Endothelial cell of umbilical vein (primary cell): ENCODE measurements at regions of chr21 and their contacts with region 1.

Region 1: DNA sequence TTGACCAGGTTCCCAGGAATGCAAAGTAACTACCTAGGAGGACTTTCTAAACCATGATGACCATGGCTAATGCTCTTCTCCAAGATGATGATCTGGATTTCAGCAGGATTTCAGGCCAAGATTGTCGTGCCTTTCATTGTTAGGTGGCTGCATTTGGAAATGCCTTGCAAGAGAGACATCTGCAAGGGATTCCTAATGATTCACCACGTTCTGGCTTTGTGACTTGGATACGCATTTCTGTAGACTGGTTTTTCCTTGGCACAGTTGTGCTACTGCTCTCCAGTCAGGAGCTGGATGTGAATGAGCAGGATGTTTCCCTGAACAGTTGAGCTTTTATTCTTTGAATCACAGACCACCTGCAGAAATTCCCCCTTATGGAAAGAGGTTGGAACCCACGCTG is 212.4 kb downstream of the BACH1 start:
- DNase-seq: no peak
- H3K4me3 ChIP-seq: no peak overlapping the region
- H3K27ac ChIP-seq: no peak overlapping the region
- H3K4me1 ChIP-seq: no peaks in the 10 kb centered on the region
- H3K27me3 ChIP-seq: no peaks in the 10 kb centered on the region
- CTCF ChIP-seq: no peak
- POLR2A ChIP-seq: no peak

Region 2: DNA sequence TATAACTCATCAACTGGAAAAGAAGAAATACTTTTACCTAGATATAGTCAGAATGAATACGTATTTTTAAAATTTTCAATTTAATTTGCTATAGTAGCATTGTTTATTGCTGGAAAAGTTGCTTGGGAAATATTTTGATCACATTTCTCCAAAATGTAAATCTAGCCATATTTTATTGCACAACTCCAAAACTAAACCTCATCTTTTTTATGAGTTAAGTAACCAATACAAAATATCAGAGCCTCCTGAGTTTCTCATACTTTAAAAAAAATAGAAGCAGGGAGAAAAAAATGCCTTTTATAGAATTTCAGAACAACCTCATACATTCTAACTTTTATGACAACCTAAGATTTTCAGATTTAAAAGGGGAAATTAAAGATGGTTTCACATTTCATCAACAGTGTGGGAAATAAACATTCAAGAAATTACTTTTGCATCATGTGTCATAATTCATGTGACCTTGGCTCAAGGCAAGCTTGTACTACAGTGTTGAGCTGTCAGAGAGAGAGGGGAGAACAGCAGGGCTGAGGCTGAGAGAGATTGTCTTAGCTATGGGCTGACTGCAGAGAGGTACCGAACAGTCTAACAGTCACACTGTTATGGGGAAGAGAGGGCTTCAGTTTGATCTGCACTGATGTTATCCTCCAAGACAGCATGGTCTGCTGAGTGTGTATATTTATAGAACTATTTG is 1037.4 kb before region 1 on chr21:
- CTCF ChIA-PET with region 1: no interaction called
- POLR2A ChIA-PET with region 1: no interaction called
- dilution Hi-C with region 1: no loop called
- intact Hi-C with region 1: no loop called
- DNase-seq: no peak
- H3K4me3 ChIP-seq: no peak overlapping the region
- H3K27ac ChIP-seq: no peak overlapping the region
- H3K4me1 ChIP-seq: no peaks in the 10 kb centered on the region
- H3K27me3 ChIP-seq: no peaks in the 10 kb centered on the region
- CTCF ChIP-seq: no peak
- POLR2A ChIP-seq: no peak

Region 3: GRCh38 chr21:29382006-29382654 is 129.0 kb before region 1 on chr21:
- CTCF ChIA-PET with region 1: no interaction called
- POLR2A ChIA-PET with region 1: no interaction called
- dilution Hi-C with region 1: no loop called
- intact Hi-C with region 1: no loop called
- DNase-seq: peak; percentile 13
- H3K4me3 ChIP-seq: no peak overlapping the region
- H3K27ac ChIP-seq: no peak overlapping the region
- H3K4me1 ChIP-seq: no peaks in the 10 kb centered on the region
- H3K27me3 ChIP-seq: no peaks in the 10 kb centered on the region
- CTCF ChIP-seq: no peak
- POLR2A ChIP-seq: no peak

Region 4: GRCh38 chr21:29697555-29698193 is 186.6 kb after region 1 on chr21:
- CTCF ChIA-PET with region 1: no interaction called
- POLR2A ChIA-PET with region 1: no interaction called
- dilution Hi-C with region 1: loop called (anchors 10 kb)
- intact Hi-C with region 1: no loop called
- DNase-seq: no peak
- H3K4me3 ChIP-seq: no peak overlapping the region
- H3K27ac ChIP-seq: no peak overlapping the region
- H3K4me1 ChIP-seq: no peaks in the 10 kb centered on the region
- H3K27me3 ChIP-seq: no peaks in the 10 kb centered on the region
- CTCF ChIP-seq: no peak
- POLR2A ChIP-seq: no peak